ENCODE measurements at regions of chr18 and their contacts with region 1.

Region 1: GRCh38 chr18:45879681-45880655 is 54.5 kb downstream of the SIGLEC15 start:
- DNase-seq: no peak
- H3K4me3 ChIP-seq: no peak overlapping the region
- CTCF ChIP-seq: peak; percentile 100

Region 2: DNA sequence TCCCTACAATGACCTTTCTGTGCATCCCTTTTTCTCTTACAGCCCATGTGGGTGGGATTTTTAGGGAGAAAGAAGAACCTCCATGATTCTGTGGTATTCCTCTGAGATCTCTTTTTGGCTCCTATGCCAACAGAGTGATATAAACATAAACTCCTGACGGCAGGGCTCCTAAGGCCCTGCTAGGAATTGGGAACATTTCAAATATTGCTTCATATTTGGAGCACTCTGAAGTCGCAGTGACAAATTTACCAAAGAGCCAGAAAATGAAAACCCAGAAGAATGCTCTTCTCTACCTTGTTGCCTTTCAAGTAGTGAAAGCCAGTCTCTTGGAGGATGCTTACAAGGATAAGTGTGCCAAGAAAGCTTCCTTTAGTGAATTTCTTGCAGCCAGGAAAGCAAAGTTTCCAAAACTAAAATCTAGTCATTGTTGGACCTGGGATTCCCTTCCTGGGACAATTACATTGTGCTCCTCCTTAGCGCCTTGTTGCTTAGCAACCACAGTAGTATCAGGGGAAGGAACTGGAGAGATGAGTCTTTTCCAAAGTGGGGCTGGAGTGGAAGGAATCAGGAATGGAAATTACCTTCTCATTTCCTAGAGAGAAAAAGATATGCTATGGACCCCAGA is 1206.6 kb before region 1 on chr18:
- CTCF ChIA-PET with region 1: no interaction called
- POLR2A ChIA-PET with region 1: no interaction called
- DNase-seq: no peak
- H3K4me3 ChIP-seq: no peak overlapping the region
- CTCF ChIP-seq: no peak

Region 3: DNA sequence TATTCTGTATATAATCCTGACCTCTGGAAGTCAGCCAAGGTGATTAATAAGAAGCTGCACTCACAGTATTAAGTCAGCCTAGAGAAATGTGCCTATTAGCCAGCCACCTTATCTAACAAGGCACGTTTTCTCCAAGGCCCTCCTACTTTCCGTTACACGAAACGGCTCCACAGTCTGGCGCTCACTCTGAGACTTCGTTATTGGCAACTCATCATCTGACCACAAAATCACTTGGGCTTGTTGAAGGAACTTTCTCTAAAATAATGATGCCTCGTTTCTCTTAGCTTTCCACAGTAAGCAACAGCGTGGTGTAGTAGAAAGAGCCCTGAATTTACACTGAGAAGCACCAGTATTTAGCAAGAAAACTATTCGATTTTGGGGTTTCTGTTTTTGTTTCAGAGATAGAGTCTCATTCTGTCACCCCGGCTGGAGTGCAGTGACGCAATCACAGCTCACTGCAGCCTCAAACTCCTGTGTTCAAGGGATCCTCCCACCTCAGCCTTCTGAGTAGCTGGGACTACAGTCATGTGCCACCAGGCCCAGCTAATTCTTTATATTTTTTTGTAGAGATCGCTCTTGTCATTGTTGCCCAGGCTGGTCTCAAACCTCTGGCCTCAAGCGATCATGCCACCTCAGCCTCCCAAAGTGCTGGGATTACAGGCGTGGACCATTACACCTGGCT is 209.5 kb before region 1 on chr18:
- CTCF ChIA-PET with region 1: interaction called, 385 read pairs
- POLR2A ChIA-PET with region 1: interaction called, 3 read pairs
- DNase-seq: no peak
- H3K4me3 ChIP-seq: no peak overlapping the region
- CTCF ChIP-seq: no peak

Region 4: DNA sequence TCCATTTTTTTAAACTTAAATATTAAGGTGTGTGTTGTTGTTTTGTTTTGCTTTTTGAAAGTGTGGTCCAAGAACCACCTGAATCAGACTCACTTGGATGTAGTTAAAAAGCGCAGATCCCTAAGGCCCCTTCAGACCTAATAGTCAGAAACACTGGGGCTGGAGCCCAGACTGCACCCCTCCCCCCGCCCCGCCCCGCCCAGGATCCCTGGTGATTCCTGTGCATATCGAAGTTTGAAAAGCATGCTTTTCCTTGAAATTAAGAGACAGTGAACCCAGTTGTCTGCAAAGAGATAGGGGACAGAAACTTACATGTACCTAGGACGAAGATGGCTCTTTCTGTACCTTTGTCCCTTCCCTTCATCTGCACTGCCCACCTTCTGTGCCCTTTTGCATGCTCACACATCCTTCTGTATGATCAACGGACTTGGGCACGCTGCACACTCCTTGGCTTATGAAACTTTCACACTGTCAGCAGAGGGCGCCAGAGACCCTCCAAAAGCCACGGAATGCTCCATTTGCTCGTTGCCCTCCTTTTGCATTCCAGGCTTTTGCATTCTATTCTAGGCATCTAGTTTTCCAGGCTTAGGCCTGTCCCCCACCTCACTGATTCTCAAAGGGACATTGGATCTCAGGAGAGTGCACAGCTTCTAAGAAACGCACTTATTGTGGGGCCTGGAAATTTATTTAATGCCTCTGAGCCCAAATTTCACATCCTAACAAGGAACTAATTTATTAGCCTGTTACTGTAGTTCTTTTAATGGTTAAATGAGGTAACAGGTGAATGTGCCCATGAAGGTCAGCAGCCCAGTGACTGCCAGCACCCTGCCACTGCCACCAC is 188.8 kb before region 1 on chr18:
- CTCF ChIA-PET with region 1: interaction called, 226 read pairs
- POLR2A ChIA-PET with region 1: no interaction called
- DNase-seq: no peak
- H3K4me3 ChIP-seq: 0 out of 2 replicates have a peak overlapping the region, but pooled peaks have one; percentile 3
- CTCF ChIP-seq: peak; percentile 89

Region 5: DNA sequence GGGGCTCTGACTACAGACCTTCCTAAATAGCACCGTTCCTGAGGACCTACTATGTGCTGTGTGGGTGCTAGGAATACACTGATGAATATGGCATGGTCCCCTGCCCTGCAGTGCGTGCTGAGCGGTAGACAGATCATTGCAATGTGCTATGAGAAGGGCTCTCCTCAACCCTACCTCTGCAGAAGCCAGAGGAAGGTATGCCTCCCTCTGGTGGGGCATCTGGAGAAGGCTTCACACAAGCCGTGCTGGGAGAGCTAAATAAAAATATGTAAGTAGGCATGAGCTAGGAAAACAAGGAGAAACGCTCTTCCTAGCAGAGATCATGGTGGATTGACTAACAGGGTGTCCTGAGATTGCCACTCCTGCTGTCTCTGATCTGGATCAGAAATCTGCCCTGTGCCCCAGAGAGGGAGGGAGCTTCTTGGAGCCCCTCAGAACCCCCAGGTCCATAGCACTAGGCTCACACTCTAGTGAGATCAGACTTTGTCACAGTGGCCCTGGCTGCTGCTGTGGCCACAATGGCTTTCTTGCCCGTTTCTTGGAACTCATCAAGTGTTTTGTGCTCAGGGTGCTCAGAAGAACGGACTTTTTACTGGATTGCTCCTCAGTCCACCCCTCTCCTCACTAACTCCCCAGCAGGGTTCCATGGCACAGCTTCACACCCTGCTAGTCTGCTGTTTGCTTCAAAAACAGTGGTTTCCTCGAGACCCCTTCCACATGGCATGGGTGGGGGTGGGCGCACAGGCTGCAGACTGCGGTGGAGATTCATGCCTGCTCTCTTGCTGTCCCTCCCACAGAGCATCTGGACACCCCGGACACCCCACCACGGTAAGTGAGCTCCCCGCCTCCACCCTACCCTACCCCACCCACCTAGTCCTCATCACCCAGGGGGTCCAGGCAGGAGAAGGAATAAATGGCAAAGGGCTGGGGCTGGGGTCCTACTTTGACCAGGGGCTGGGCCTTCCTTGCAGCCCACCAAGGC is 40.3 kb before region 1 on chr18:
- CTCF ChIA-PET with region 1: interaction called, 14 read pairs
- POLR2A ChIA-PET with region 1: no interaction called
- DNase-seq: no peak
- H3K4me3 ChIP-seq: no peak overlapping the region
- CTCF ChIP-seq: peak; percentile 81

Region 6: GRCh38 chr18:45890606-45891005 is 10.6 kb after region 1 on chr18:
- CTCF ChIA-PET with region 1: interaction called, 73 read pairs
- POLR2A ChIA-PET with region 1: no interaction called
- DNase-seq: no peak
- H3K4me3 ChIP-seq: no peak overlapping the region
- CTCF ChIP-seq: no peak

Region 7: DNA sequence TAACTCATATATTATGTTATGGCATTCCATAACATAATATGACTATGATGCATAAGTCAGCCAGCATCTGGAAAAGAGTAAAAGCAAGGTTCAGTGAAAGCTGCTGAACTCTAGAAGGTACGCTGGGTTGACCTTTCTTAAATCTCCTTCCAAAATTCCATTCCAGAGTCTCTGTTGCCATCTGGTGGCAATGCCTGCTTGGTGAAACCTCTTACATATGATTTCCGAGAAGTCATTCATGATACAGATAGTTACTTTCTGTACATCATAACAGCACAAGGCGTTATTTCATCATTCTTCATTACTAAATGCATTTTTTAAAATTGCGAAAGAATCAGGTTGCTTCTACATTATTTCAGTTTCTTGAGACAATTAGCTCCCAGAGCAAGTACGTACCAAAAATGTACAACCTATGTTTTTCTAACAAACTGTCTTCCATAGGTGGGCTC is 94.1 kb after region 1 on chr18:
- CTCF ChIA-PET with region 1: interaction called, 51 read pairs
- POLR2A ChIA-PET with region 1: no interaction called
- DNase-seq: peak; percentile 63
- H3K4me3 ChIP-seq: no peak overlapping the region
- CTCF ChIP-seq: peak; percentile 73

Measured in AG04449 (cell line).